Left colon (tissue), 2 donors: ENCODE measurements at regions of chr20 and their contacts with region 1.

Region 1: GRCh38 chr20:46604551-46605133 is 46.6 kb downstream of the SLC13A3 start:
- DNase-seq: no peak
- ATAC-seq: no peak

Region 2: GRCh38 chr20:46666818-46667515 is 62.3 kb after region 1 on chr20:
- intact Hi-C with region 1: loop called in 1 of 2 experiments (anchors 10 kb)
- DNase-seq: no peak
- ATAC-seq: no peak